ENCODE measurements at regions of chr6 and their contacts with region 1.

Region 1: DNA sequence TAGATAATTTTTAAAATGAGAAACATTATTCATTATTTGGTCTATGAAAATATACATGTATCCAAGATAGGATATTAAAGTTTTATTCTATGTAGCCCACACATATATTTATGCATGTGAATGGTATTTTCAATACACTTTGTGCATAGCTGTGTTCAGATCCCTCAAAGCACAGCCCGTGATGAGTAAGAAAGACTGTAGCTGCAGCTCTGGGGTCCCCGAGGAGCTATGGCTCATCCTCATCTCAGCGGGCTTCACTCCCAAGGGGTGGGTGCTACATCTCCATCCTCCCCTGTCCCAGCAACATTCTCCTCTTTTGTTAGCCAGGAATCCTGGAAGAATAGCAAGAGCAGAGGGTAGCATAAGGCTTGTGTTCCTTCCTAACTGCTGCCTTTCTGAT is 130.8 kb downstream of the SAMD5 start:
- DNase-seq: no peak
- ATAC-seq: no peak
- H3K4me3 ChIP-seq: no peak overlapping the region
- H3K27ac ChIP-seq: no peak overlapping the region
- H3K4me1 ChIP-seq: no peaks in the 10 kb centered on the region
- H3K27me3 ChIP-seq: peaks cover 16 to 20% of the 10 kb centered on the region in 2 experiments; a peak in 4 of 5 replicates
- CTCF ChIP-seq: no peak
- EP300 ChIP-seq: no peak
- POLR2A ChIP-seq: no peak
- RAD21 ChIP-seq: no peak

Region 2: GRCh38 chr6:147579667-147580066 is 59.6 kb before region 1 on chr6:
- CTCF ChIA-PET with region 1: no interaction called
- POLR2A ChIA-PET with region 1: no interaction called
- in situ Hi-C with region 1: no loop called
- intact Hi-C with region 1: no loop called
- DNase-seq: no peak
- ATAC-seq: no peak
- H3K4me3 ChIP-seq: no peak overlapping the region
- H3K27ac ChIP-seq: no peak overlapping the region
- H3K4me1 ChIP-seq: no peaks in the 10 kb centered on the region
- H3K27me3 ChIP-seq: peaks cover 8 to 9% of the 10 kb centered on the region in 2 experiments; a peak in 4 of 5 replicates
- CTCF ChIP-seq: no peak
- EP300 ChIP-seq: no peak
- POLR2A ChIP-seq: no peak
- RAD21 ChIP-seq: no peak

Region 3: GRCh38 chr6:147651249-147652063 is 12.2 kb after region 1 on chr6:
- CTCF ChIA-PET with region 1: no interaction called
- POLR2A ChIA-PET with region 1: interaction called, 11 read pairs
- in situ Hi-C with region 1: no loop called
- intact Hi-C with region 1: no loop called
- DNase-seq: peak in 1 of 4 experiments; percentile 31
- ATAC-seq: peak; percentile 88
- H3K4me3 ChIP-seq: no peak overlapping the region
- H3K27ac ChIP-seq: no peak overlapping the region
- H3K4me1 ChIP-seq: no peaks in the 10 kb centered on the region
- H3K27me3 ChIP-seq: peaks cover 3 to 8% of the 10 kb centered on the region in 2 experiments; a peak in 4 of 5 replicates
- CTCF ChIP-seq: peak in 2 of 3 experiments; percentile 17 to 46; a peak in 3 of 6 replicates
- EP300 ChIP-seq: no peak
- POLR2A ChIP-seq: no peak
- RAD21 ChIP-seq: peak; percentile 52 to 59

Measured in K562 (cell line).